HCT116 (cell line): ENCODE measurements at regions of chr20 and their contacts with region 1.

Region 1: GRCh38 chr20:38962044-38962927 is at the start of gene DHX35:
- DNase-seq: peak; percentile 91
- ATAC-seq: peak; percentile 98
- H3K4me3 ChIP-seq: peak within 1 kb of the TSS; percentile 78 to 97
- H3K27ac ChIP-seq: peak within 1 kb of the TSS; percentile 93
- H3K4me1 ChIP-seq: peaks cover 7 to 21% of the 10 kb centered on the region in 2 experiments
- H3K27me3 ChIP-seq: no peaks in the 10 kb centered on the region
- CTCF ChIP-seq: peak in 2 of 3 experiments; percentile 9 to 23; a peak in 1 of 6 replicates
- POLR2A ChIP-seq: peak; percentile 59
- RAD21 ChIP-seq: peak; percentile 31; the same call in 1 of the 2 replicates
- total RNA-seq, gene DHX35: 11.2 TPM

Region 2: GRCh38 chr20:38926142-38926933 is 35.9 kb before region 1 on chr20 and contains the start of gene FAM83D:
- CTCF ChIA-PET with region 1: interaction called, 4 read pairs
- POLR2A ChIA-PET with region 1: interaction called, 11 read pairs
- RAD21 ChIA-PET with region 1: no interaction called
- intact Hi-C with region 1: no loop called
- DNase-seq: peak; percentile 97
- ATAC-seq: peak; percentile 91
- H3K4me3 ChIP-seq: peak within 1 kb of the TSS; percentile 93 to 94
- H3K27ac ChIP-seq: peak within 1 kb of the TSS; percentile 83
- H3K4me1 ChIP-seq: peaks cover 8 to 31% of the 10 kb centered on the region in 2 experiments
- H3K27me3 ChIP-seq: peaks cover 4% of the 10 kb centered on the region; the same call in 1 of the 2 replicates
- CTCF ChIP-seq: no peak; a peak in 2 of 6 replicates
- POLR2A ChIP-seq: peak; percentile 94
- RAD21 ChIP-seq: peak; percentile 76
- total RNA-seq, gene FAM83D: 51.1 TPM

Region 3: DNA sequence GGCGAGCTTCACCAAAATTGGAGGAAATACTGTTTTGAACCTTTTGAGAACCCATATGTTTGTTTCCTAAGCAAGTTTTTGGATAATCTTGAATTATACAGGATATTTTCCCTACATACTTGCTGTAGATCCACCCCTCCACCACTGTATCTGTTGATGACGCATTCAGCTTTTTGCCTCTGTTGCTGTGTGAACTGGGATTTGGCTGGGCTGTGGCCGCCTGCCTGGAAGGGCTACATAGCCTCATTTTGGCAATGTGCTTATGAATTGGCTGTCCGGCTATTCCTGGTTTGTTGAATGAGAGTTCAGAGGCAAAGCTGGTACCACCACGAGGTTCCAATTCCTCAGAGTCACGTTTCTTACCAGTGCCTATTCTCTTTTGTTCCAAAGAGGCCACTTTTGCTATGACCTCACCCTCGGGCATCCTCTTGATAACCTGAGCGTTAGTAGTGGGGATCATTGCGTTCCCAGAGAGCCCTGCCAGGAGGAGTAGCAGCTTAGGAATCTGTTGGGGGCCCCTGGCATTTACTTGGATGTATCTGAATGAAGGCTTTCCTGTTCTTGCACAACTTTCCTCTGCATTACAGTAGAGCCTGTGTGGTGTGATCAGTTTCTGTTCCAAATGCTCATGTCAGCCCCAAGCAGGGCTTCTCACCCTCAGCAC is 29.7 kb before region 1 on chr20:
- CTCF ChIA-PET with region 1: no interaction called
- POLR2A ChIA-PET with region 1: interaction called, 5 read pairs
- RAD21 ChIA-PET with region 1: no interaction called
- intact Hi-C with region 1: loop called (anchors 2 kb)
- DNase-seq: no peak
- ATAC-seq: no peak
- H3K4me3 ChIP-seq: no peak overlapping the region
- H3K27ac ChIP-seq: no peak overlapping the region
- H3K4me1 ChIP-seq: peaks cover 23 to 48% of the 10 kb centered on the region in 2 experiments
- H3K27me3 ChIP-seq: no peaks in the 10 kb centered on the region
- CTCF ChIP-seq: no peak
- POLR2A ChIP-seq: no peak
- RAD21 ChIP-seq: no peak

Region 4: GRCh38 chr20:38973645-38974044 is 11.4 kb after region 1 on chr20:
- CTCF ChIA-PET with region 1: no interaction called
- POLR2A ChIA-PET with region 1: no interaction called
- RAD21 ChIA-PET with region 1: no interaction called
- intact Hi-C with region 1: no loop called
- DNase-seq: no peak
- ATAC-seq: no peak
- H3K4me3 ChIP-seq: no peak overlapping the region
- H3K27ac ChIP-seq: no peak overlapping the region
- H3K4me1 ChIP-seq: no peaks in the 10 kb centered on the region
- H3K27me3 ChIP-seq: no peaks in the 10 kb centered on the region
- CTCF ChIP-seq: no peak
- POLR2A ChIP-seq: no peak
- RAD21 ChIP-seq: no peak